MCF 10A (cell line): ENCODE measurements at regions of chr12 and their contacts with region 1.

Region 1: DNA sequence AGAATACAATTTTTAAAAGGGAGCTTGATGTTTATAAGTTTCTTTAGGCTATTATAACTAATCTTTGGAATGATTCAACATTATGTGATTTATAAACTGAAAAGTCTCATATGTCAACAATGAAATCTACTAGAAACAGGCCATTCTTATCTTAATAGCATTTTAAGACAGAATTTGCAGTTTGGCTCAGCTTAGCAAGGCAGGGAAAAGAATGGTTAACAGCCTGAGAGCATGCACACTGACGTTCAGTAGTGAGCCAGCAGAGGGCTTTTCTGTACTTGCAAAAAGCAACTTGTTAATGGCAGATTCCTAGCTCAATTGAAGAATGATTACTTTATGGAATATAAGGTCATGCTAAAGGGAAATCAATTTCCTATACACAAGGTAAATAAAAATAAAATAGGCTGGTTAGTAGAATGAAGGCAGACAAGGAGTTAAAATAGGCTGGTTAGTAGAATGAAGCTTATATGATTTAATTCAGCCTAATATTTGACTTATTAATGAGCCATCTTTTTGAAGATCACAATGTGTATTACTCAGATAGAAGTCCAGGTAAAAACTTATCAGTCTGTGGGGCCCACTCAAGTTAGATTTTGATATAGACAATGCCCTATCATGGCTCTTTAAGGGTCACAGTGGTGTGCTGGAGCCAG is 95.9 kb downstream of the OTOGL start:
- DNase-seq: peak; percentile 54
- H3K4me3 Mint-ChIP-seq: no peak overlapping the region
- H3K27ac Mint-ChIP-seq: no peak overlapping the region
- H3K4me1 Mint-ChIP-seq: no peaks in the 10 kb centered on the region
- H3K27me3 Mint-ChIP-seq: no peaks in the 10 kb centered on the region
- CTCF ChIP-seq: peak; percentile 62

Region 2: GRCh38 chr12:80205960-80206359 is 10.8 kb after region 1 on chr12:
- CTCF ChIA-PET with region 1: interaction called, 22 read pairs
- POLR2A ChIA-PET with region 1: no interaction called
- intact Hi-C with region 1: no loop called
- DNase-seq: no peak
- H3K4me3 Mint-ChIP-seq: no peak overlapping the region
- H3K27ac Mint-ChIP-seq: no peak overlapping the region
- H3K4me1 Mint-ChIP-seq: no peaks in the 10 kb centered on the region
- H3K27me3 Mint-ChIP-seq: no peaks in the 10 kb centered on the region
- CTCF ChIP-seq: no peak

Region 3: DNA sequence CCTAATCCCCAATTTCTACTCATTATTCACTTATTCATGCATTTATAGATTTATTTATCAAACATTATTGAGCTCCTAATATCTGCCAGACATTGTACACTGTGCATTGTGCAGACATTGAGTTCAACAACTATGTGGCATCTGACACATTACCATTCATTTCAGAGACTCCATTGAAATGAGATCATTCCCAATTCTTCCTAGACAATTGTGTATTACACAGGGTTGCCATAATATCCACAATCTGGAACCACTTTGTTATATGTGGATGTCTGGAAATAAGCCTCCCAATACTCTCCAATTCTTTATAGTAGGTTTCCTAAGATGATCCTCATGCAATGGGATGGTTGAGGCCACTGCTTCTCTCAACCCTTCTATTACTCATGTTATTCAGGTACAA is 69.2 kb after region 1 on chr12:
- CTCF ChIA-PET with region 1: interaction called, 233 read pairs
- POLR2A ChIA-PET with region 1: interaction called, 13 read pairs
- intact Hi-C with region 1: loop called (anchors 1 kb)
- DNase-seq: no peak
- H3K4me3 Mint-ChIP-seq: no peak overlapping the region
- H3K27ac Mint-ChIP-seq: no peak overlapping the region
- H3K4me1 Mint-ChIP-seq: peaks cover 11% of the 10 kb centered on the region
- H3K27me3 Mint-ChIP-seq: peaks cover 12% of the 10 kb centered on the region
- CTCF ChIP-seq: no peak

Region 4: GRCh38 chr12:80277732-80278131 is 82.5 kb after region 1 on chr12:
- CTCF ChIA-PET with region 1: interaction called, 233 read pairs
- POLR2A ChIA-PET with region 1: no interaction called
- intact Hi-C with region 1: no loop called
- DNase-seq: no peak
- H3K4me3 Mint-ChIP-seq: no peak overlapping the region
- H3K27ac Mint-ChIP-seq: no peak overlapping the region
- H3K4me1 Mint-ChIP-seq: no peaks in the 10 kb centered on the region
- H3K27me3 Mint-ChIP-seq: no peaks in the 10 kb centered on the region
- CTCF ChIP-seq: no peak

Region 5: GRCh38 chr12:80763874-80764273 is 568.7 kb after region 1 on chr12:
- CTCF ChIA-PET with region 1: interaction called, 4 read pairs
- POLR2A ChIA-PET with region 1: no interaction called
- intact Hi-C with region 1: loop called (anchors 10 kb)
- DNase-seq: peak; percentile 56
- H3K4me3 Mint-ChIP-seq: no peak overlapping the region
- H3K27ac Mint-ChIP-seq: no peak overlapping the region
- H3K4me1 Mint-ChIP-seq: no peaks in the 10 kb centered on the region
- H3K27me3 Mint-ChIP-seq: peaks cover 65% of the 10 kb centered on the region
- CTCF ChIP-seq: peak; percentile 52